ENCODE measurements at regions of chr2 and their contacts with region 1.

Region 1: GRCh38 chr2:131413148-131413747 is 49.3 kb upstream of the RAB6D start:
- DNase-seq: peak in 4 of 5 donors; percentile 35 to 44 (median 42)
- H3K4me3 ChIP-seq: no peak overlapping the region
- H3K4me3 Mint-ChIP-seq: no peak overlapping the region
- H3K27ac ChIP-seq: no peak overlapping the region
- H3K27ac Mint-ChIP-seq: peak overlapping the region in 1 of 7 donors; percentile 53
- H3K4me1 ChIP-seq: no peaks in the 10 kb centered on the region
- H3K4me1 Mint-ChIP-seq: peaks cover 0 to 1% (median 0%) of the 10 kb centered on the region in 4 donors
- H3K27me3 ChIP-seq: peaks cover 4% of the 10 kb centered on the region
- H3K27me3 Mint-ChIP-seq: peaks cover 9 to 28% of the 10 kb centered on the region in 2 donors

Region 2: GRCh38 chr2:131673392-131674173 is 260.3 kb after region 1 on chr2:
- CTCF ChIA-PET with region 1: interaction called, 57 read pairs
- POLR2A ChIA-PET with region 1: no interaction called
- intact Hi-C with region 1: loop called (anchors 1 kb)
- DNase-seq: peak; percentile 39 to 66 (median 52)
- H3K4me3 ChIP-seq: no peak overlapping the region
- H3K4me3 Mint-ChIP-seq: peak overlapping the region; percentile 44 to 78 (median 70)
- H3K27ac ChIP-seq: no peak overlapping the region
- H3K27ac Mint-ChIP-seq: no peak overlapping the region
- H3K4me1 ChIP-seq: peaks cover 17% of the 10 kb centered on the region
- H3K4me1 Mint-ChIP-seq: peaks cover 4 to 7% (median 5%) of the 10 kb centered on the region in 4 donors
- H3K27me3 ChIP-seq: peaks cover 12% of the 10 kb centered on the region
- H3K27me3 Mint-ChIP-seq: peaks cover 6 to 18% of the 10 kb centered on the region in 2 donors